ENCODE measurements at regions of chr20 and their contacts with region 1.

Region 1: DNA sequence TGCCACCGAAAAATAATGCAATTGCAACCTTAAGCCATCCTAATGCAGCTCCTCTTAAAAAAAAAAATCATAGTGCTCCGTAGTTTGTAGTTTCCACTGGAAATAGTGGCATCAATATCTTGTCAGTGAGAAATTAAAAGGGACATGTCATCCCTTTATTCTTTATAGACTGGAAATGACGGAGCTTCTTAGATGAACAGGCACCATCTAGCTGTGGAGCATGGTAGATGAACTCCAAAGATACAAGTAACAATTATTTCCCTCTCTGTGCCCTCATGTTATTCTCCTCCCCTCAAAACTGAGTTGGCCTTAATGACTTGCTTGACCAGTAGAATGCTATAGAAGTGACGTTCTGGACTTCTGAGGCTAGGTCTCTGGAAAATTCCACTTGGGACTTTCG is 268.1 kb upstream of the SPTLC3 start:
- DNase-seq: no peak
- ATAC-seq: no peak
- H3K4me3 ChIP-seq: no peak overlapping the region
- H3K4me3 Mint-ChIP-seq: no peak overlapping the region
- H3K27ac ChIP-seq: no peak overlapping the region
- H3K27ac Mint-ChIP-seq: no peak overlapping the region
- H3K4me1 ChIP-seq: no peaks in the 10 kb centered on the region
- H3K4me1 Mint-ChIP-seq: no peaks in the 10 kb centered on the region
- H3K27me3 ChIP-seq: no peaks in the 10 kb centered on the region
- H3K27me3 Mint-ChIP-seq: no peaks in the 10 kb centered on the region
- CTCF ChIP-seq: no peak

Region 2: GRCh38 chr20:12728782-12729181 is 11.9 kb before region 1 on chr20:
- CTCF ChIA-PET with region 1: no interaction called
- POLR2A ChIA-PET with region 1: no interaction called
- intact Hi-C with region 1: loop called in 1 of 2 experiments (anchors 1 kb)
- DNase-seq: no peak
- ATAC-seq: no peak
- H3K4me3 ChIP-seq: no peak overlapping the region
- H3K4me3 Mint-ChIP-seq: no peak overlapping the region
- H3K27ac ChIP-seq: no peak overlapping the region
- H3K27ac Mint-ChIP-seq: no peak overlapping the region
- H3K4me1 ChIP-seq: no peaks in the 10 kb centered on the region
- H3K4me1 Mint-ChIP-seq: no peaks in the 10 kb centered on the region
- H3K27me3 ChIP-seq: no peaks in the 10 kb centered on the region
- H3K27me3 Mint-ChIP-seq: no peaks in the 10 kb centered on the region
- CTCF ChIP-seq: no peak

Region 3: DNA sequence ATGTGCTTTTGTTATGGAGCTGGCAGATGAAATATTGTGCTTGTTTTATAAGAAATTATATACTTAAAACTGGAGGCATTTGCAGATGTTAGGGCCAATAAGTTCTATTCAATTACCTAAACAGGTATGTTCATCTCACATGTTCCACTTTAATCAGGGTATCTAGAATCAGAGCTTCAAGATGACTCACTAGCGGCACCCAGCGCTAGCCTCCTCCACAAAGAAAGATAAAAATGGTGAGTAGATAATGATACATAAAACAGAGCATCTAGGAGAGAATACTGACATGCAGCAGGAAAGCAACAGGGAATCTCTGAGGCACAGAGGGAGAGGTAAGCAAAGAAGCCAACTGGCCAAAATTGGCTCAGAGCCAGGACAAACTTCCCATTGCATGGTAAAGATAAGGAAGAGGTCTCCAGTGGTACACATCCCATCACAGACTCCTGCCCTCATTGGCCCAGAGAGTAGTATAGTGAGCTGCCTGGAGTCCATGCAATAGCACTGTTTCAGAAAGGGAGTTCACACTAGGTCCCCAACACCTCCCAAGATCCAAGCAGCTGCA is 67.4 kb after region 1 on chr20:
- CTCF ChIA-PET with region 1: no interaction called
- POLR2A ChIA-PET with region 1: no interaction called
- intact Hi-C with region 1: no loop called
- DNase-seq: no peak
- ATAC-seq: no peak
- H3K4me3 ChIP-seq: no peak overlapping the region
- H3K4me3 Mint-ChIP-seq: no peak overlapping the region
- H3K27ac ChIP-seq: no peak overlapping the region
- H3K27ac Mint-ChIP-seq: no peak overlapping the region
- H3K4me1 ChIP-seq: no peaks in the 10 kb centered on the region
- H3K4me1 Mint-ChIP-seq: no peaks in the 10 kb centered on the region
- H3K27me3 ChIP-seq: no peaks in the 10 kb centered on the region
- H3K27me3 Mint-ChIP-seq: no peaks in the 10 kb centered on the region
- CTCF ChIP-seq: no peak